Posterior vena cava (tissue), 2 donors: ENCODE measurements at regions of chr21 and their contacts with region 1.

Region 1: GRCh38 chr21:43758111-43758641 is 17.9 kb downstream of the CSTB start:
- DNase-seq: no peak

Region 2: GRCh38 chr21:42956819-42957632 is 801.1 kb before region 1 on chr21:
- intact Hi-C with region 1: loop called in 1 of 2 experiments (anchors 10 kb)
- DNase-seq: no peak

Region 3: GRCh38 chr21:43874085-43874785 is 116.1 kb after region 1 on chr21:
- intact Hi-C with region 1: no loop called
- DNase-seq: peak; percentile 66